CD8-positive, alpha-beta memory T cell (primary cell): ENCODE measurements at regions of chr14 and their contacts with region 1.

Region 1: DNA sequence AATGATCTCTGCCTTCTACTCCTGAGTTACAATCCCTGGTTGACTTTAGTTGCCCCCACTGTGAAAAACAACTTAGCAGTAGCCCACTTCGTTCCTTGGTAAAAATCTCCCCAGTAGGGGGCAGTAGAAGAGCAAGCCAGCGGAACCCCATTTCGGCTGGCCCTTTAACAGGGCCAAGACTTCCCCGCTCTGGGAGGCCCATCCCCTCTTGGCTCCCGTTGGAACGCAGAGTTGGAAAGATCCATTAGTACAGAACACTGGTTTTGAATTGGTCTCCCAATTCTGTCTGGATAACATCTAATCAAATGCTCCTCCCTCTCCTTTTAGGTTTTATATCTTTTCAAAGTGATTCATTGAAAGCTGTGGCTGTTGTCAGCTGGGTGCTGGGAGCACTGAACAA is 1133.3 kb downstream of the BCL11B start:
- DNase-seq: peak; percentile 37 to 82 (median 62)
- H3K4me3 ChIP-seq: peak overlapping the region; percentile 37
- H3K4me3 Mint-ChIP-seq: peak overlapping the region; percentile 70 to 85 (median 77)
- H3K27ac ChIP-seq: no peak overlapping the region
- H3K27ac Mint-ChIP-seq: peak overlapping the region; percentile 40 to 94 (median 84)
- H3K4me1 ChIP-seq: peaks cover 84% of the 10 kb centered on the region
- H3K4me1 Mint-ChIP-seq: peaks cover 79 to 97% (median 92%) of the 10 kb centered on the region in 3 donors
- H3K27me3 ChIP-seq: no peaks in the 10 kb centered on the region
- H3K27me3 Mint-ChIP-seq: no peaks in the 10 kb centered on the region

Region 2: GRCh38 chr14:98167705-98168104 is 29.0 kb after region 1 on chr14:
- CTCF ChIA-PET with region 1: interaction called, 41 read pairs
- POLR2A ChIA-PET with region 1: interaction called, 4 read pairs
- DNase-seq: peak in 4 of 5 donors; percentile 6 to 54 (median 35)
- H3K4me3 ChIP-seq: peak overlapping the region; percentile 35
- H3K4me3 Mint-ChIP-seq: peak overlapping the region in 6 of 7 donors; percentile 56 to 71 (median 66)
- H3K27ac ChIP-seq: no peak overlapping the region
- H3K27ac Mint-ChIP-seq: peak overlapping the region; percentile 15 to 98 (median 90)
- H3K4me1 ChIP-seq: peaks cover 84% of the 10 kb centered on the region
- H3K4me1 Mint-ChIP-seq: peaks cover 79 to 92% (median 91%) of the 10 kb centered on the region in 3 donors
- H3K27me3 ChIP-seq: no peaks in the 10 kb centered on the region
- H3K27me3 Mint-ChIP-seq: peaks cover 0 to 4% of the 10 kb centered on the region in 2 donors

Region 3: GRCh38 chr14:98189062-98189461 is 50.4 kb after region 1 on chr14:
- CTCF ChIA-PET with region 1: interaction called, 28 read pairs
- POLR2A ChIA-PET with region 1: interaction called, 4 read pairs
- DNase-seq: peak in 1 of 5 donors; percentile 42
- H3K4me3 ChIP-seq: peak overlapping the region; percentile 52
- H3K4me3 Mint-ChIP-seq: peak overlapping the region; percentile 18 to 86 (median 79)
- H3K27ac ChIP-seq: peak overlapping the region; percentile 58
- H3K27ac Mint-ChIP-seq: peak overlapping the region; percentile 91 to 99 (median 96)
- H3K4me1 ChIP-seq: peaks cover 98% of the 10 kb centered on the region
- H3K4me1 Mint-ChIP-seq: peaks cover 96 to 100% (median 99%) of the 10 kb centered on the region in 3 donors
- H3K27me3 ChIP-seq: no peaks in the 10 kb centered on the region
- H3K27me3 Mint-ChIP-seq: no peaks in the 10 kb centered on the region